PC-3 (cell line): ENCODE measurements at regions of chrX and their contacts with region 1.

Region 1: DNA sequence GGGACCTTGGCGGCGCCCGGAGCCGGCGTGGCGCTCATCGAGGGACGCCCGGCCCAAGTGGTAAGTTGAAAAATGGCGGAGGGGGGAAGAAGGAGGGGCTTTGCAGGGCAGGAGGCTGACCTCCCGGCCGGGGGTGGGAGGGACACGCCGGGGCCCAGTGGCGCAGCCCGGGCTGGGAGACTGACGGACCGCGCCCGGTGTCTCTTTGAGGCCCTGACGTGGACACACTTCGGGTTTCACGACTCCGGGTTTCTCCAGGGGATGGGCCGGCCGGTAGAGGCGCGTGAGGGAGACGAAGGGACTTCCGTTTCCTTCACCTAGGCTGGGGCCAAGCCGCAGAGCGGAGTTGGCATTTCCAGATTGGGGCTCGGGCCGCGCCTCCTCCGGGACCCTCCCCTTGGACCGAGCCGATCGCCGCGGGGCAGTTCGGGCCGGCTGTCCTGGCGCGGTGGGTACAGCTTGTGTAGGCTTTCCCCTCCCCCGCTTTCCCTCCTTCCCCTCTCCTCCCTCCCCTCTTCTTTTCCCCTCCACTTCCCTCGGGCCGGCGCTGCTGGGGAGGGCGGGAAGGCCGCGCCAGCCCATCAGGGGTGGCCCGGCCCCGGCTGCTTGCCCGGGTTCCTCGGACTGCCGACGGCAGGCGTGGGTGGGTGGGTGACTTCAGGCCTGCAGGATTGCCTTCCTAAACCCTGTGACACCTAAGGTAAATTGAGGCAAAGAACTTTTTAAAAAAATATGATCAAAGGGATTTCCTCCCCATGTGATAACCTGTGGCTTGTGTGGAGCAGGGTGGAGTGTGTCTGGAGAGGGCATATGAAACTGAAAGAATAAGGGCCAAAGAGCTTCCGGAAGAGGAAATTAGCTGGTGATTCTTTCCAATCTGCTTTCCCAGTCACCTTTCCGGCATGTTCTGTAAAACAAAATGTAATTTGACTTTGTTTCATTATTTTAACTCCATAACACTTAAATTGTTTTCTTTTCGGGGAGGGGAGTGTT is at the start of gene XIAP:
- DNase-seq: peak; percentile 82
- ATAC-seq: peak; percentile 86
- H3K4me3 ChIP-seq: peak within 1 kb of the TSS; percentile 90
- H3K27ac ChIP-seq: peak within 1 kb of the TSS; percentile 91
- H3K4me1 ChIP-seq: peaks cover 11% of the 10 kb centered on the region
- H3K27me3 ChIP-seq: no peaks in the 10 kb centered on the region
- CTCF ChIP-seq: no peak
- total RNA-seq, gene XIAP: 29.2 and 35.8 TPM in 2 replicates

Region 2: GRCh38 chrX:123878252-123878721 is 18.1 kb after region 1 on chrX:
- CTCF ChIA-PET with region 1: no interaction called
- POLR2A ChIA-PET with region 1: interaction called, 16 read pairs
- intact Hi-C with region 1: loop called (anchors 2 kb)
- DNase-seq: no peak
- ATAC-seq: peak; percentile 14; the same call in 1 of the 2 replicates
- H3K4me3 ChIP-seq: no peak overlapping the region
- H3K27ac ChIP-seq: peak overlapping the region; percentile 14; the same call in 1 of the 2 replicates
- H3K4me1 ChIP-seq: peaks cover 20% of the 10 kb centered on the region
- H3K27me3 ChIP-seq: no peaks in the 10 kb centered on the region
- CTCF ChIP-seq: no peak

Region 3: GRCh38 chrX:123884809-123885408 is 24.8 kb after region 1 on chrX:
- CTCF ChIA-PET with region 1: no interaction called
- POLR2A ChIA-PET with region 1: interaction called, 27 read pairs
- intact Hi-C with region 1: no loop called
- DNase-seq: peak; percentile 68
- ATAC-seq: peak; percentile 50
- H3K4me3 ChIP-seq: no peak overlapping the region
- H3K27ac ChIP-seq: no peak overlapping the region
- H3K4me1 ChIP-seq: peaks cover 13% of the 10 kb centered on the region
- H3K27me3 ChIP-seq: no peaks in the 10 kb centered on the region
- CTCF ChIP-seq: peak; percentile 70

Region 4: GRCh38 chrX:123976706-123977316 is 116.7 kb after region 1 on chrX:
- CTCF ChIA-PET with region 1: no interaction called
- POLR2A ChIA-PET with region 1: no interaction called
- intact Hi-C with region 1: no loop called
- DNase-seq: peak; percentile 69
- ATAC-seq: peak; percentile 66
- H3K4me3 ChIP-seq: no peak overlapping the region
- H3K27ac ChIP-seq: no peak overlapping the region
- H3K4me1 ChIP-seq: peaks cover 14% of the 10 kb centered on the region
- H3K27me3 ChIP-seq: no peaks in the 10 kb centered on the region
- CTCF ChIP-seq: peak; percentile 67

Region 5: GRCh38 chrX:125029131-125029530 is 1169.0 kb after region 1 on chrX:
- CTCF ChIA-PET with region 1: no interaction called
- POLR2A ChIA-PET with region 1: no interaction called
- intact Hi-C with region 1: no loop called
- DNase-seq: no peak
- ATAC-seq: no peak
- H3K4me3 ChIP-seq: no peak overlapping the region
- H3K27ac ChIP-seq: no peak overlapping the region
- H3K4me1 ChIP-seq: no peaks in the 10 kb centered on the region
- H3K27me3 ChIP-seq: no peaks in the 10 kb centered on the region
- CTCF ChIP-seq: no peak